Heart left ventricle (tissue), 16 donors: ENCODE measurements at regions of chr2 and their contacts with region 1.

Region 1: DNA sequence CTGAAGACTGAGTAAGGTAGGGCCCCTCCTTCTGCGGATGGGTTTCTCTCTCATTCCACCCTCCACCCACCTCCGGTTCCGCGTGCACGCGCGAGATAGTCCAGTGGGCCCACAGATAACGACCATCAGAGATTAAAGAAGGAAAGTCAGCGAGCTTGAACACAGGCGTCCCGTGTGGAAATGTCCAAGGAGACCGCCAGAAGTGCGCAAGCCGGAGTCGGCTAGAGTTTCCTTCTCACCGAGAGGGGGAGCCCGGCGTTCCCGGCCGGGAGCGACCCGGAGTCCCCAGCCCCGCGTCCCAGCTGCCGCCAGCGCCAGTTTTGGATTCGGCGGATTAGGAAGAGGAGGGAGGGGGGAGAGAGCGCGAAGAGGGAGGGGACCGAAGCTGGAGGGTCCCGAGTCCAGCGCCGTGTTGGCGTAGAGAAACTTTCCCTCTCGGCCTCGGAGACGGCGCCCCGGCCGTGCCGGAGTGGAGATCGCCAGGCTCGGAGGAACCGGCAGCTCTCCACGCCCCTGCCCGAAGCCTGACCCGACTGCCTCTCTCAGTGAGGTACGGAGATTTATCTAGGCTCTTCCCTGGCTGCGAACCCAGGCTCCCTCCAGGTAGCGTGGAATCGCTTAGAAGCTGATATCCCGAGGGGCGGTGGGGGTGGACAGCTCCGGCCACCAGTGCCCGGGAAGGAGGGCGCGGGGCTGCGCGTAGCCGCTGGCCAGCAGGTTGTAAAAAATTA is at the start of gene GULP1:
- DNase-seq: peak; percentile 68 to 85 (median 80)
- ATAC-seq: peak; percentile 75 to 90 (median 88)
- H3K4me3 ChIP-seq: peak within 1 kb of the TSS; percentile 45 to 83 (median 74)
- H3K27ac ChIP-seq: peak within 1 kb of the TSS; percentile 53 to 92 (median 83)
- H3K4me1 ChIP-seq: peaks cover 0 to 24% (median 4%) of the 10 kb centered on the region in 12 donors
- H3K27me3 ChIP-seq: peaks cover 0 to 15% (median 0%) of the 10 kb centered on the region in 9 donors
- CTCF ChIP-seq: peak; percentile 34 to 77 (median 59)
- POLR2A ChIP-seq: no peak
- total RNA-seq, gene GULP1: 2.7 to 8.3 (median 5.1) TPM

Region 2: GRCh38 chr2:188333751-188334524 is 42.2 kb after region 1 on chr2:
- intact Hi-C with region 1: loop called in 1 of 10 experiments (anchors 2 kb)
- DNase-seq: peak in 4 of 5 donors; percentile 23 to 60 (median 32)
- ATAC-seq: peak; percentile 82 to 91 (median 87)
- H3K4me3 ChIP-seq: peak overlapping the region in 6 of 12 donors; percentile 6 to 24 (median 19)
- H3K27ac ChIP-seq: peak overlapping the region in 11 of 12 donors; percentile 9 to 75 (median 56)
- H3K4me1 ChIP-seq: peaks cover 0 to 24% (median 9%) of the 10 kb centered on the region in 12 donors
- H3K27me3 ChIP-seq: no peaks in the 10 kb centered on the region
- CTCF ChIP-seq: no peak
- POLR2A ChIP-seq: no peak

Region 3: DNA sequence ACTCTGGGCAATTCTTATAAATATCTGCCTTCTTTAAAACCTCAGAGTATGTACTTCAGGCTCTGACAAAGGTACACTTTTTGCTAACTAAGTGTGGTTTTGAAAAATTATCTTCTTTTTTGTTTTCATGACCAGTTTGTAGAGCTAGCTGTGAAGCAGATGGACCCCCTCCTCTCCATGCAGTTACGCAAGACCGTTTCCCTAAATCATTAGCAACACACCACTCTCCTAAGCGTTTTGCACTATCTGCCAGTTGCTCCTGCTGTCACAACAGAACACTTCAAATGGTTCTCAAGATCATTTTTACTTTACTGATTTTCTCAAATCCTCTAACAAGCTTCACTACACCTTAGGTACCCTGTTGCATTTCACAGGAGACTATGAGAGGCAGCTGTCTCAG is 53.2 kb after region 1 on chr2:
- intact Hi-C with region 1: loop called in 1 of 10 experiments (anchors 10 kb)
- DNase-seq: no peak
- ATAC-seq: no peak
- H3K4me3 ChIP-seq: no peak overlapping the region
- H3K27ac ChIP-seq: no peak overlapping the region
- H3K4me1 ChIP-seq: peaks cover 0 to 5% (median 0%) of the 10 kb centered on the region in 12 donors
- H3K27me3 ChIP-seq: no peaks in the 10 kb centered on the region
- CTCF ChIP-seq: no peak
- POLR2A ChIP-seq: no peak

Region 4: GRCh38 chr2:188369365-188369764 is 77.6 kb after region 1 on chr2:
- intact Hi-C with region 1: loop called in 6 of 10 experiments (anchors 2 to 5 kb)
- DNase-seq: peak in 3 of 5 donors; percentile 26 to 31 (median 27)
- ATAC-seq: peak in 3 of 4 donors; percentile 72 to 77 (median 73)
- H3K4me3 ChIP-seq: no peak overlapping the region
- H3K27ac ChIP-seq: no peak overlapping the region
- H3K4me1 ChIP-seq: peaks cover 0 to 3% (median 0%) of the 10 kb centered on the region in 12 donors
- H3K27me3 ChIP-seq: no peaks in the 10 kb centered on the region
- CTCF ChIP-seq: peak; percentile 51 to 78 (median 69)
- POLR2A ChIP-seq: no peak

Region 5: DNA sequence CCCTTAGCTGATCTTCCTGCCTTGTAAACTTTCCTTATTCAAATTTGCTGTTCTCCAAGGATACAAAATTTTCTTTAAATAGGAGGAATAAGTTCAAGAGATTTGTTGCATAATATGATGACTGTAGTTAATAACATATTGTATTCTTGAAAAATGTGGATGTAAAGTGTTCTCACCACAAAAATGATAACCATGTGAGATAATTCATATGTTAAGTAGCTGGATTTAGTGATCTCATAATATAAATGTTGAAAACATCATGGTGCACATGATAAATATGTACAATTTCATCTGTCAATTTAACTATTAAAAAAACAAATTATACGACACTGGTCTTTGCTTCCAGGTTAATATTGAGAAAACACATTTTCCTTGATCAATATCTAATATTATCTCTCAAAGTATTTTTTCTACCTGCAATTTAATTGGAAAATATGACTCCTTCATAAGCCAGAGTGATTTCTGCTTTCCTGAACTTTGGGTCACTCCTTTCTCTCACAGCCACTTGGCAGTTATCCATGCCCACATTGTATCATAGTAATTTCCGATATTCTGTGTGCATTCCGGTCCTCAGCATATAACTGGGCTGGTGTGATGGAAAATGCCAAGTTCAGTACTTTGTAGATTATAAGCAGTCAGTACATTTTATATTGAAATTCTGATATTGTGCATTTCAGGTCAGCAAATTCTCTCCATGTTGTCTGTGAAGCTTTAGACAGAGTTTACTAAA is 152.5 kb after region 1 on chr2:
- intact Hi-C with region 1: no loop called
- DNase-seq: no peak
- ATAC-seq: no peak
- H3K4me3 ChIP-seq: no peak overlapping the region
- H3K27ac ChIP-seq: no peak overlapping the region
- H3K4me1 ChIP-seq: no peaks in the 10 kb centered on the region
- H3K27me3 ChIP-seq: no peaks in the 10 kb centered on the region
- CTCF ChIP-seq: no peak
- POLR2A ChIP-seq: no peak

Region 6: DNA sequence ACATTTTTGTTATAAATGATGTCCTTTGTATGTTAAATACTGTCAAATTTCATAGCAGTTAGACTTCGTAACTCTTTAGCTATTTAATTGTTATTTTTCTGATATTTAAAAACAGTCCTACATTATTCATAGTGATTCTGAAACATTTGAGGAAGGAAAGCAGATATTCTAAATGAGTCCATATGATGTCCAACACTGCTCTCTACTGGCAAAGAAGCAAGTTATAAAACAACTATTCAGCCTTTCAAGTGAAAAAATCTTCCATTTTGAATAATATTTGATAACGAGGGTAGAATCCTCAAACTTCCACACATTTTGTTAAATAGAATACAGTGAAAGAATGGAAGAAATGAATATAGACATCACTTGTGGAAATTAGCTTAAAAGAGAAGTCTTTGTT is 220.7 kb after region 1 on chr2:
- intact Hi-C with region 1: loop called in 2 of 10 experiments (anchors 5 to 10 kb)
- DNase-seq: no peak
- ATAC-seq: peak in 2 of 4 donors; percentile 32 to 57
- H3K4me3 ChIP-seq: no peak overlapping the region
- H3K27ac ChIP-seq: no peak overlapping the region
- H3K4me1 ChIP-seq: peaks cover 0 to 6% (median 0%) of the 10 kb centered on the region in 12 donors
- H3K27me3 ChIP-seq: no peaks in the 10 kb centered on the region
- CTCF ChIP-seq: peak; percentile 11 to 70 (median 52)
- POLR2A ChIP-seq: no peak